Astrocyte of the cerebellum (primary cell): ENCODE measurements at regions of chr5 and their contacts with region 1.

Region 1: GRCh38 chr5:91074615-91075014 is 308.5 kb downstream of the ARRDC3 start:
- DNase-seq: peak; percentile 59
- H3K4me3 ChIP-seq: no peak overlapping the region
- CTCF ChIP-seq: no peak

Region 2: GRCh38 chr5:91024727-91025126 is 49.9 kb before region 1 on chr5:
- in situ Hi-C with region 1: loop called (anchors 5 kb)
- DNase-seq: no peak
- H3K4me3 ChIP-seq: no peak overlapping the region
- CTCF ChIP-seq: no peak